ENCODE measurements at regions of chr9 and their contacts with region 1.

Region 1: DNA sequence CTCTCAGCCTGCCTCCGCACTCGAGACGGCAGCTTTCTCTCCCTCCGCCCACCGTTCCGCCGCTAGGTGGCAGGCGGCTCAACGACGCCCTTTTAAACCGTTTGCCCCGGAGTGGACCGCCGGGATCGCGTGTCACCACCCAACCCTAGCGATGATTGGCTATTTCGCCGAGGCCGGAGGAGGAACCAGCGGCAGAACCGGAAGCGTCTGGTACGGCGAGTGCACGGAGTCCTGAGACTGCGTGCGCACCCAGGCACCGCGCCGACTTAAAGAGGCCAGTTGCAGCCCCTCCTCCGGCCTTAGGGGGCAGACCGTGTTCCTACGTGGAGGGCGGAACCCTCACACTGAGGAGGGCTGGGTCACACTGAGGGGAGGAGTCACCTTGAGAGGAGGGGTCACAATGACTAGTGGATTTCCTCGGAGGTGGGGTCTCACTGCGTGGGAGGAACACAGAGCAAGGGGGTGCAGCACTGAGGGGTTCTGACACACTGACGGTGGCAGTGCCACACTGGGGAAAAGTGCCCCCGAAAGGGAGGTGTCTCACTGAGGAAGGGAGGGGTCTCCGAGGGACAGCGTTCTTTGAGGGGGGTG is 980 bp upstream of the TESK1 start:
- DNase-seq: peak; percentile 98 to 100
- ATAC-seq: peak; percentile 88 to 97 (median 90)
- H3K4me3 ChIP-seq: peak overlapping the region; percentile 51
- H3K4me3 Mint-ChIP-seq: peak overlapping the region; percentile 98
- H3K27ac ChIP-seq: peak overlapping the region; percentile 80
- H3K27ac Mint-ChIP-seq: peak overlapping the region; percentile 96 to 98
- H3K4me1 ChIP-seq: peaks cover 37% of the 10 kb centered on the region
- H3K4me1 Mint-ChIP-seq: peaks cover 22 to 37% of the 10 kb centered on the region in 2 donors
- H3K27me3 ChIP-seq: no peaks in the 10 kb centered on the region
- H3K27me3 Mint-ChIP-seq: no peaks in the 10 kb centered on the region
- CTCF ChIP-seq: peak; percentile 98

Region 2: GRCh38 chr9:35071814-35072460 is 532.1 kb before region 1 on chr9:
- intact Hi-C with region 1: loop called (anchors 2 kb)
- DNase-seq: peak; percentile 82 to 83
- ATAC-seq: peak; percentile 67 to 85 (median 73)
- H3K4me3 ChIP-seq: peak overlapping the region; percentile 74
- H3K4me3 Mint-ChIP-seq: peak overlapping the region; percentile 88
- H3K27ac ChIP-seq: peak overlapping the region; percentile 96
- H3K27ac Mint-ChIP-seq: peak overlapping the region; percentile 88 to 94
- H3K4me1 ChIP-seq: peaks cover 42% of the 10 kb centered on the region
- H3K4me1 Mint-ChIP-seq: peaks cover 52 to 57% of the 10 kb centered on the region in 2 donors
- H3K27me3 ChIP-seq: no peaks in the 10 kb centered on the region
- H3K27me3 Mint-ChIP-seq: no peaks in the 10 kb centered on the region
- CTCF ChIP-seq: peak; percentile 34

Region 3: GRCh38 chr9:35566417-35566816 is 37.7 kb before region 1 on chr9:
- intact Hi-C with region 1: no loop called
- DNase-seq: no peak
- ATAC-seq: no peak
- H3K4me3 ChIP-seq: no peak overlapping the region
- H3K4me3 Mint-ChIP-seq: no peak overlapping the region
- H3K27ac ChIP-seq: no peak overlapping the region
- H3K27ac Mint-ChIP-seq: no peak overlapping the region
- H3K4me1 ChIP-seq: peaks cover 22% of the 10 kb centered on the region
- H3K4me1 Mint-ChIP-seq: peaks cover 21 to 30% of the 10 kb centered on the region in 2 donors
- H3K27me3 ChIP-seq: no peaks in the 10 kb centered on the region
- H3K27me3 Mint-ChIP-seq: no peaks in the 10 kb centered on the region
- CTCF ChIP-seq: no peak

Region 4: DNA sequence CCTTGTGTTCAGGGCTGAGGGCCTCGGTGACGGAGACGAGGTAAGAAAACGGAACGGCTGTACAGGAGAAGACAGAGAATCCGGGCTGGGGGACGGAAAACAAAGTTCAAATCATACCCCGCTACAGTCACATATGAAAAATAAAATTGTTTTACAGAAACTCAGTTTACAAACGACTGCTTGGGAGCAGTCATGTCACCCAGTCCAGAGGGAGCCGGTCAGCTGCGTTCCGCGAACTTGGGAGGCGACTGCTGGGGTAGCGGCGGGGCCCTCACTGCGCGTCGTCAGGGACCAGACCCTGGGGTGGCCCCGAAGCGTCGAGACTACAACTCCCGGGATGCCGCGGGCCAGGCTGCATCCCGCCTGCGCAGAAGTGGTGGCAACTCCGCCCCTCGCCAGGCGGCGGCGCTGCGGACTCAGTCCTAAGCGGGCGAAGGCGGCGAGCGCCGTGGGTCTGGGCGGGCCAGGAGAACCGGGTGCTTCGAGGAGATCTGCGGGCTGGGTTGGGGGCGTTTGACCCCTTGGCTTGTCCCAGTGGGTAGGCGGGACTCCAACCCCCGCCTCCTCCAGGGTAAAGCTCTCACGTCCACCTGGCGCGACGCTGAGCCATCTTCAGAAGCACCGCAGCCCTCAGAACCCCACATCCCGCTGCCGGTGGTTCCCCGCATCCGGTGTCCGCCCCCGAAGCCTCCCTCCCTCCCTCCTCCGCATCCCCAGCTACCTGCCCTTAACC is 42.6 kb after region 1 on chr9:
- intact Hi-C with region 1: loop called (anchors 1 kb)
- DNase-seq: peak; percentile 94 to 95
- ATAC-seq: peak; percentile 97 to 99 (median 97)
- H3K4me3 ChIP-seq: peak overlapping the region; percentile 55
- H3K4me3 Mint-ChIP-seq: peak overlapping the region; percentile 99
- H3K27ac ChIP-seq: peak overlapping the region; percentile 82
- H3K27ac Mint-ChIP-seq: peak overlapping the region; percentile 98
- H3K4me1 ChIP-seq: peaks cover 79% of the 10 kb centered on the region
- H3K4me1 Mint-ChIP-seq: peaks cover 42 to 58% of the 10 kb centered on the region in 2 donors
- H3K27me3 ChIP-seq: no peaks in the 10 kb centered on the region
- H3K27me3 Mint-ChIP-seq: no peaks in the 10 kb centered on the region
- CTCF ChIP-seq: peak; percentile 94

Region 5: GRCh38 chr9:35696525-35697215 is 92.6 kb after region 1 on chr9:
- intact Hi-C with region 1: loop called (anchors 2 kb)
- DNase-seq: peak; percentile 46 to 79
- ATAC-seq: peak; percentile 93 to 100 (median 97)
- H3K4me3 ChIP-seq: no peak overlapping the region
- H3K4me3 Mint-ChIP-seq: no peak overlapping the region
- H3K27ac ChIP-seq: peak overlapping the region; percentile 23
- H3K27ac Mint-ChIP-seq: peak overlapping the region; percentile 23 to 67
- H3K4me1 ChIP-seq: peaks cover 8% of the 10 kb centered on the region
- H3K4me1 Mint-ChIP-seq: peaks cover 10 to 18% of the 10 kb centered on the region in 2 donors
- H3K27me3 ChIP-seq: no peaks in the 10 kb centered on the region
- H3K27me3 Mint-ChIP-seq: no peaks in the 10 kb centered on the region
- CTCF ChIP-seq: peak; percentile 88

Region 6: GRCh38 chr9:35829084-35829763 is 225.1 kb after region 1 on chr9 and contains the start of gene TMEM8B:
- intact Hi-C with region 1: loop called (anchors 5 kb)
- DNase-seq: peak; percentile 88 to 96
- ATAC-seq: peak; percentile 94 to 95 (median 94)
- H3K4me3 ChIP-seq: peak within 1 kb of the TSS; percentile 82
- H3K4me3 Mint-ChIP-seq: peak within 1 kb of the TSS; percentile 99
- H3K27ac ChIP-seq: peak within 1 kb of the TSS; percentile 70
- H3K27ac Mint-ChIP-seq: peak within 1 kb of the TSS; percentile 92 to 93
- H3K4me1 ChIP-seq: peaks cover 23% of the 10 kb centered on the region
- H3K4me1 Mint-ChIP-seq: peaks cover 27 to 38% of the 10 kb centered on the region in 2 donors
- H3K27me3 ChIP-seq: no peaks in the 10 kb centered on the region
- H3K27me3 Mint-ChIP-seq: no peaks in the 10 kb centered on the region
- CTCF ChIP-seq: no peak
- total RNA-seq, gene TMEM8B: 5.2 to 7.8 (median 5.4) TPM

Region 7: DNA sequence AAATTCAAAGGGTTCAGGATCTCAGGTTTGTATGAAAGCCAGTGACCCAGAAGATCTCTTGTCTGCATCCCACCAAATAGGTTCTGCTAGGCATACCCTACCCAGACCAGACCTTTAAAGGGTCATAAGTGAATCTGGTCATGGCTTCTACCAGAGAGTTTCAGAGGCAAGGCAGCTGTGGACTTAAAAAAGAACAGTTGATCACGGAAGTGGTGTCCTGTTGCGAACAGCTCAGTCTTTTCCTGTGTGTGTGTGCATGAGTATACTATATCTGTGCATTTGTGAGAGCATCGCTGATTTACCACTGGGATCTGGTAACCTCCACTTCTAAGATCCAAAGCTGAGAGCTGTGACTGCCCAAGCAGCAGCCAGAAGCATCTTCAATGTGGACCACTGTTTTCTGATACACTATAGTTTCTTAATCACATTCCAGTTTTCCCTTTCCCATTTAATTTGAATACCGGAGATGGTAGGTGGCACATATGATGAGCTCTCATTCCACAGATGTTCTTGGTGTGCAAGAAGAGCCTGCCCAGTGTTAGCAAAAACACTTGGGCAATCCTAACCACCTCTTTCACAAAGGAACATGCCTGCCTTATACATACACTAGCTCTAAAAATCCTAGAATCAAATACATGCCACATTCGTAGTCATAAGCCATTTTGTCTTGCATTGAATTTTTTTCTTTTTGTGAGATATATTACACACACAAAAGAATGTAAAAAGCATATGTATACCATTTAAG is 390.1 kb after region 1 on chr9:
- intact Hi-C with region 1: no loop called
- DNase-seq: no peak
- ATAC-seq: no peak
- H3K4me3 ChIP-seq: no peak overlapping the region
- H3K4me3 Mint-ChIP-seq: no peak overlapping the region
- H3K27ac ChIP-seq: no peak overlapping the region
- H3K27ac Mint-ChIP-seq: no peak overlapping the region
- H3K4me1 ChIP-seq: no peaks in the 10 kb centered on the region
- H3K4me1 Mint-ChIP-seq: no peaks in the 10 kb centered on the region
- H3K27me3 ChIP-seq: peaks cover 4% of the 10 kb centered on the region
- H3K27me3 Mint-ChIP-seq: peaks cover 38 to 61% of the 10 kb centered on the region in 2 donors
- CTCF ChIP-seq: no peak

Measured in natural killer cell (primary cell).